GM12878 (cell line): ENCODE measurements at regions of chr13 and their contacts with region 1.

Region 1: DNA sequence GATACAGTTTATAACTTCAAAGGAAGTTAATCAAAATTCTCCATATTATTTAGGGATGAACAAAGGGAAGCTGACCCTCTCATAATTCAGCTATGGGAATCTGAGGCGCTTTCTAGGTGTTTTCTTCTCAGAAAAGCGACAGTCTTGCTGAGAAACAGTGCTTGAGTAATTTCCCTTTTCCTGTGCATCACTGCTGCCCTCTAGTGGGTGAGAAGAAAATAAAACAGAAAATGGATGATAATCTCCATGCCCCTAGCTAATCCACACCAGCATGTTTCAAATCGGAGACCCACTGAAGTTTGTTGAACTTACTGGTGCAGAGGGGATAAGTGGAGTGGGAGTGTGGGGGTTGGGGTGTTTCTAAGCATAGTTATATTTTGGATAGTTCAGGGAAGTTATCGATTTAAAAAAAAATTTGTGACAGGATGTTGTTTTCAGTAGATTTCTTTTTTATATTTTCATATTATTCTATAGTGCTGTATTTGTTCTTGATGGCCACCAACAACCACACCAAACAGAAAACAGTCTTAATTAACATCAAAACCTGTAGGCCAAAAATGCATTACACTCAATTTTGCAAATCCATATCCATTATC is 21.4 kb downstream of the LCP1 start:
- DNase-seq: no peak
- ATAC-seq: peak; percentile 54
- H3K4me3 ChIP-seq: peak overlapping the region; percentile 47
- H3K27ac ChIP-seq: peak overlapping the region; percentile 53; the same call in 1 of the 2 replicates
- H3K4me1 ChIP-seq: peaks cover 21% of the 10 kb centered on the region
- H3K27me3 ChIP-seq: no peaks in the 10 kb centered on the region
- CTCF ChIP-seq: peak; percentile 70 to 79 (median 78)
- EP300 ChIP-seq: no peak
- POLR2A ChIP-seq: no peak
- RAD21 ChIP-seq: peak; percentile 67

Region 2: GRCh38 chr13:46126552-46127357 is 33.8 kb before region 1 on chr13:
- CTCF ChIA-PET with region 1: interaction called, 9 read pairs
- POLR2A ChIA-PET with region 1: interaction called, 3 read pairs
- RAD21 ChIA-PET with region 1: interaction called, 4 read pairs
- SMC1A ChIA-PET with region 1: interaction called, 10 read pairs
- in situ Hi-C with region 1: no loop called
- intact Hi-C with region 1: no loop called
- DNase-seq: no peak
- ATAC-seq: peak; percentile 77
- H3K4me3 ChIP-seq: no peak overlapping the region
- H3K27ac ChIP-seq: no peak overlapping the region
- H3K4me1 ChIP-seq: no peaks in the 10 kb centered on the region
- H3K27me3 ChIP-seq: no peaks in the 10 kb centered on the region
- CTCF ChIP-seq: peak; percentile 92 to 98 (median 92); a peak in 5 of 6 replicates
- EP300 ChIP-seq: no peak
- POLR2A ChIP-seq: peak; percentile 65
- RAD21 ChIP-seq: peak; percentile 88

Region 3: GRCh38 chr13:46143184-46143701 is 17.3 kb before region 1 on chr13:
- CTCF ChIA-PET with region 1: interaction called, 42 read pairs
- POLR2A ChIA-PET with region 1: interaction called, 6 read pairs
- RAD21 ChIA-PET with region 1: interaction called, 5 read pairs
- SMC1A ChIA-PET with region 1: interaction called, 34 read pairs
- in situ Hi-C with region 1: no loop called
- intact Hi-C with region 1: no loop called
- DNase-seq: no peak
- ATAC-seq: no peak; the same call in 2 of the 3 replicates
- H3K4me3 ChIP-seq: no peak overlapping the region
- H3K27ac ChIP-seq: no peak overlapping the region
- H3K4me1 ChIP-seq: no peaks in the 10 kb centered on the region
- H3K27me3 ChIP-seq: no peaks in the 10 kb centered on the region
- CTCF ChIP-seq: no peak
- EP300 ChIP-seq: no peak
- POLR2A ChIP-seq: 0 out of 2 replicates have a peak, but pooled peaks have one; percentile 20
- RAD21 ChIP-seq: no peak

Region 4: GRCh38 chr13:46149272-46150133 is 11.1 kb before region 1 on chr13:
- CTCF ChIA-PET with region 1: interaction called, 30 read pairs
- POLR2A ChIA-PET with region 1: interaction called, 6 read pairs
- RAD21 ChIA-PET with region 1: interaction called, 6 read pairs
- SMC1A ChIA-PET with region 1: interaction called, 34 read pairs
- in situ Hi-C with region 1: no loop called
- intact Hi-C with region 1: no loop called
- DNase-seq: no peak
- ATAC-seq: peak; percentile 20
- H3K4me3 ChIP-seq: no peak overlapping the region
- H3K27ac ChIP-seq: no peak overlapping the region; the same call in 1 of the 2 replicates
- H3K4me1 ChIP-seq: no peaks in the 10 kb centered on the region
- H3K27me3 ChIP-seq: no peaks in the 10 kb centered on the region
- CTCF ChIP-seq: no peak
- EP300 ChIP-seq: no peak
- POLR2A ChIP-seq: no peak; the same call in none of the 2 replicates
- RAD21 ChIP-seq: no peak

Region 5: DNA sequence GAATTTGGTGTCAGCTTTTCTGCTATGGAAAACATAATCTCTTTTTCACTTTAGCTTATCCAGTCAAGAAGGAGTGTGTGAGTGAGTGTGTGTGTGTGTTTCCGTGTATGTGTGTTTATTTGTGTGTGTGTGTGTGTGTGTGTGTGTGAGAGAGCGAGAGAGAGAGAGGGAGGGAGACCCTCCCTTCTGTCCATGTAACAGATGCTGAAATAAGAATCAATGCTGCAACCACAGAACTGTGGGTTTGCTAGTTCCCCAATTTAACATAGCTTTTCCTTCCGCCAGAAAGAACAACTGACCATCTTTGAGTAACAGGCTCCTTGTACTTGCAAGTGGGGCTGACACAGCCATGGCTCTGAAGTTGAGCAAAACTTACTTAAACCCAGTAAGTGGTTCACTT is 16.2 kb after region 1 on chr13:
- CTCF ChIA-PET with region 1: interaction called, 172 read pairs
- POLR2A ChIA-PET with region 1: interaction called, 95 read pairs
- RAD21 ChIA-PET with region 1: interaction called, 184 read pairs
- SMC1A ChIA-PET with region 1: interaction called, 295 read pairs
- in situ Hi-C with region 1: no loop called
- intact Hi-C with region 1: loop called (anchors 2 kb)
- DNase-seq: peak; percentile 79
- ATAC-seq: peak; percentile 35
- H3K4me3 ChIP-seq: peak overlapping the region; percentile 72
- H3K27ac ChIP-seq: peak overlapping the region; percentile 99
- H3K4me1 ChIP-seq: peaks cover 15% of the 10 kb centered on the region
- H3K27me3 ChIP-seq: no peaks in the 10 kb centered on the region
- CTCF ChIP-seq: no peak
- EP300 ChIP-seq: peak; percentile 48 to 52; a peak in 1 of 4 replicates
- POLR2A ChIP-seq: no peak
- RAD21 ChIP-seq: no peak

Region 6: DNA sequence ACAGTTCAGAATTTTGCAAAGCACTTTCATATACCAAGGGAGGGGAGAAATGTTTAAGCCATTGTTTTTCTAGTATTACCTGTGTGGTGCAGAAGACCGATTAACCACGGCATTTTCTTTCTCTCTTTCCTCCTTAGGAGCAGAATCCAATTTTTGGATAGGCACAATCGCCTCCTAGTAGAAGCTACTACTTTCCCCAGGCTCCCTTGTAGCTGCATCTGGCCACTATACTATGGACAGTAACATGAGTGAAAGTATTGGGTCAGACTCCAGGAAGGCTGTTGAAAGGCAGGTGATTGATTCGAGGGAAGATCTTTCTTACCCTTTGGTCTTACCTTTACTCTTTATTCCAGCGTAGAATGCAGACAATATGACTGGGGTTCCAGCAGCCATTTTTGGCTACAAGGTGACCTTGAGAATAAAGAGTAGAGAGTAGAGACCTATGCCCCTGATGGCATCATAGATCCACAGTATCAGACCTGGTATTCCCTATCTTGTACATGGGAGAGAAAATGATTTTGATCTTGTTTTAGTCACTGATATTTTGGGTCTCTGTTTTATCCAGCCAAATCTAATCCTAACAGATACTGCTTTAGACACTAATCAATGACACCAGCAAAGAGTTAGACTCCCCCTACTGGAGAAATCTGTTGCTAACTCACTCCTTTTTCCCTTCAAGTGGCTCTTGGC is 128.1 kb after region 1 on chr13:
- CTCF ChIA-PET with region 1: interaction called, 15 read pairs
- POLR2A ChIA-PET with region 1: no interaction called
- RAD21 ChIA-PET with region 1: interaction called, 3 read pairs
- SMC1A ChIA-PET with region 1: interaction called, 3 read pairs
- in situ Hi-C with region 1: no loop called
- intact Hi-C with region 1: loop called (anchors 2 kb)
- DNase-seq: peak; percentile 19
- ATAC-seq: peak; percentile 95
- H3K4me3 ChIP-seq: no peak overlapping the region
- H3K27ac ChIP-seq: no peak overlapping the region
- H3K4me1 ChIP-seq: no peaks in the 10 kb centered on the region
- H3K27me3 ChIP-seq: no peaks in the 10 kb centered on the region
- CTCF ChIP-seq: peak; percentile 78 to 84 (median 79)
- EP300 ChIP-seq: no peak
- POLR2A ChIP-seq: no peak
- RAD21 ChIP-seq: peak; percentile 93